ENCODE measurements at regions of chr6 and their contacts with region 1.

Region 1: DNA sequence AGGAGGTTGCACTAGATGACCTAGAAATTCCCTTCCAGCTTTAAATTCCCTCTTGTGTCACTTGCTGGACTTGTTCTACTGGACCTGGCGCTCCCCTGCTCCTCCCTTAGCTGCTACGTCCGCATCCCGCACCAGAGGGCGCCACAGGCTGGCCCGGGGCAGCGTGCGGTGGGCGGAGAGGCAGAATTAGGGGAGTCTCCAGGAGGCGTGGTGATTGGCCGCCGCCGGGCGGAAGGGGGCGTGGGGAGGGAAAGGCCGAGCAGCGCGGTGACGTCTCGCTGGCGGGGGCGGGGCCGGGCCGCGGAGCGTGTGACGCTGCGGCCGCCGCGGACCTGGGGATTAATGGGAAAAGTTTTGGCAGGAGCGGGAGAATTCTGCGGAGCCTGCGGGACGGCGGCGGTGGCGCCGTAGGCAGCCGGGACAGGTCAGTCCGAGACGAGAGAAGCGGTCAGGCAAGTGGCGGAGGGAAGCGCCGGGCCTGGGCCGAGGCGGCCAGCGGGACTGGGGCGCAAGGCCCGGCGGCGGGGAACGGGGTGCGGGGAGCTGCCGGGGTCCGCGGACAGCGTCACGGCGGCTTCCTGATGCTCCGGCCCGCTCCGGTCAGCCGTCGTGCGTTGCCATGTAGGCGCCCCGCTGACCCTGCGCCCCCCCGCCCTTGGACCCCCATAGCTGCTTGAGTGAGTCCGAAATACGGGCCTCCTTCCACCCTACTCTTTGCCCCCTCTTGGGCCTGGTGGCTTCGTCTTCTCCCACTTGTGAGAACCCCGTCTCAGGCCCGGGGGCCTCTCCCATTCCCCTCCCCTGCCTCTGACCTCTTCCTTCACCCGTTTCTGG is at the start of gene PPARD:
- DNase-seq: peak; percentile 97
- ATAC-seq: peak; percentile 99
- H3K4me3 ChIP-seq: peak within 1 kb of the TSS; percentile 48 to 92 (median 77)
- H3K4me3 Mint-ChIP-seq: peak within 1 kb of the TSS; percentile 99
- H3K27ac ChIP-seq: peak within 1 kb of the TSS; percentile 69 to 91
- H3K27ac Mint-ChIP-seq: peak within 1 kb of the TSS; percentile 95
- H3K4me1 ChIP-seq: peaks cover 39 to 49% of the 10 kb centered on the region in 2 donors
- H3K4me1 Mint-ChIP-seq: peaks cover 55% of the 10 kb centered on the region
- H3K27me3 ChIP-seq: no peaks in the 10 kb centered on the region
- H3K27me3 Mint-ChIP-seq: no peaks in the 10 kb centered on the region
- CTCF ChIP-seq: peak; percentile 92
- total RNA-seq, gene PPARD: 38.9 and 39.0 TPM in 2 replicates

Region 2: DNA sequence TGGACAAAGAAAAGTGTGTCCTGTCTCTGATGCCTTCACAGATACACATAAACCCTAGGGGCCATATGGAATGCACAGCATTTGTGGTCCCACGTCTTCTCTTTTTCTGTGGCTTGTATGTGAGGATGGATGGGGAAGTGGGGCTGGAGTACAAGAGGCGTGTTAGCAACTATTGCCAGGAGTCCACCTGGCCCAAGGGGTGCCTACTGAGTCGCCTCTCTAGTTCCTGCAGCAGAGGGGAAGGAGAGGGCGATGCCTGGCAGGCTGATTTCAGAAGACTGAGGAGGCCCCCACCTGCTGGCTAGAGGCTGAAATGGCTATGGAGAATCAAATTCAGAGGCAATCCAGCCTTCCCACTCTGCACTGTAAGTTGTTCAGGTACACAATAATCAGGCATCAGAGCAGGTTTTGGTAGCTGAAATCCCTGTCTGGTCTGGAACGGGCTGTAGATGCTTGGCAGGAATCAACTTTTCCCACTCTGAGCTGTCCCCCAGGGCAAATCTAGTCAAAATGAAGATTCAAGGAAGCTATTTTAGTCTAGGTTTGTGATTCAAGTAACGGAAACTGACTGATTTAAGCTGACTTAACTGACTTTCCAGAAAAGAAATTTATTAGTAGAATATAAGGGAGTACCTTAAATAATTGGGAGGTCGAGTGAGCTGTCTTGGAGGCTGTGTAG is 15.0 kb before region 1 on chr6:
- CTCF ChIA-PET with region 1: interaction called, 26 read pairs
- POLR2A ChIA-PET with region 1: interaction called, 7 read pairs
- intact Hi-C with region 1: loop called (anchors 2 kb)
- DNase-seq: peak; percentile 80
- ATAC-seq: peak; percentile 87
- H3K4me3 ChIP-seq: no peak overlapping the region
- H3K4me3 Mint-ChIP-seq: no peak overlapping the region
- H3K27ac ChIP-seq: peak overlapping the region in 1 of 2 donors; percentile 11
- H3K27ac Mint-ChIP-seq: peak overlapping the region; percentile 74
- H3K4me1 ChIP-seq: peaks cover 11 to 15% of the 10 kb centered on the region in 2 donors
- H3K4me1 Mint-ChIP-seq: peaks cover 16% of the 10 kb centered on the region
- H3K27me3 ChIP-seq: no peaks in the 10 kb centered on the region
- H3K27me3 Mint-ChIP-seq: no peaks in the 10 kb centered on the region
- CTCF ChIP-seq: peak; percentile 76

Region 3: DNA sequence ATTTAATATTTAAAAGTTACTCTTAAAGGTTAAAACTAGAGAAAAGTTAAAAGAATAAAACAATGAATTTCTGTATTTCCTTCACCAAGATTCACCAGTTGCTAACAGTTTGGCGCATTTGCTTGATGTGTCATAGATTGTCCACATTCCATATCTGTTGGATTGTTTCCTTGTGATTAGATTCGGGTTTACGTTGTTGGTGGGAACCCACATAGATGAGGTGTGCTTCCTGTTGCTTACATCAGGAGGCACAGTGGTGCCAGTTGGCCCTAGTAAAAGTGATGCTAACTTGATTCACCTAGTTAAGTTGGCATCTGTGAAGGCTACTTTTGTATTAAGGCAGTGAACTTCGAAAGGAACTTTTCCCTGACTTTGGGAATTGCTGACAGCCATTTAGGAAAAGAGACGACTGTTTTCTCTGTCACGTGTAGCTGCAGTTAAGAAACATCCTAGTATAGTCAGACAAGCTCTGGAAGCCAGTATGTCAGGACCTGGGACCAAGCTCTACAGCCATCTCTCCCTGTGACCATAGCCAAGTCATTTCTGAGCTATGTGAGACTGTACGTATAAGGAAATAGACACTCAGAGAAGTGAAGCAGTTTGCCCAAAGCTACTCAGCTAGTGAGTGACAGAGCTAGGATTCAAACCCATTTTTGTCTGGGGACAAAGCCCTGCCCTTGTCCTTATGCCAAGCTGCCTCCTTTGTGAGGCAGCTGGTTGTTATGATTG is 48.9 kb after region 1 on chr6:
- CTCF ChIA-PET with region 1: interaction called, 3 read pairs
- POLR2A ChIA-PET with region 1: interaction called, 4 read pairs
- intact Hi-C with region 1: loop called (anchors 10 kb)
- DNase-seq: no peak
- ATAC-seq: no peak
- H3K4me3 ChIP-seq: no peak overlapping the region
- H3K4me3 Mint-ChIP-seq: no peak overlapping the region
- H3K27ac ChIP-seq: no peak overlapping the region
- H3K27ac Mint-ChIP-seq: peak overlapping the region; percentile 26
- H3K4me1 ChIP-seq: peaks cover 20 to 34% of the 10 kb centered on the region in 2 donors
- H3K4me1 Mint-ChIP-seq: peaks cover 46% of the 10 kb centered on the region
- H3K27me3 ChIP-seq: no peaks in the 10 kb centered on the region
- H3K27me3 Mint-ChIP-seq: no peaks in the 10 kb centered on the region
- CTCF ChIP-seq: no peak

Region 4: GRCh38 chr6:35419417-35419816 is 76.9 kb after region 1 on chr6:
- CTCF ChIA-PET with region 1: interaction called, 10 read pairs
- POLR2A ChIA-PET with region 1: no interaction called
- intact Hi-C with region 1: no loop called
- DNase-seq: no peak
- ATAC-seq: no peak
- H3K4me3 ChIP-seq: no peak overlapping the region
- H3K4me3 Mint-ChIP-seq: no peak overlapping the region
- H3K27ac ChIP-seq: no peak overlapping the region
- H3K27ac Mint-ChIP-seq: no peak overlapping the region
- H3K4me1 ChIP-seq: peaks cover 3 to 11% of the 10 kb centered on the region in 2 donors
- H3K4me1 Mint-ChIP-seq: peaks cover 13% of the 10 kb centered on the region
- H3K27me3 ChIP-seq: no peaks in the 10 kb centered on the region
- H3K27me3 Mint-ChIP-seq: no peaks in the 10 kb centered on the region
- CTCF ChIP-seq: no peak

Region 5: GRCh38 chr6:35468181-35468979 is 125.9 kb after region 1 on chr6 and contains the start of gene RPL10A:
- CTCF ChIA-PET with region 1: interaction called, 30 read pairs
- POLR2A ChIA-PET with region 1: interaction called, 19 read pairs
- intact Hi-C with region 1: loop called (anchors 1 kb)
- DNase-seq: peak; percentile 98
- ATAC-seq: peak; percentile 91
- H3K4me3 ChIP-seq: peak within 1 kb of the TSS; percentile 51 to 95 (median 87)
- H3K4me3 Mint-ChIP-seq: peak within 1 kb of the TSS; percentile 99
- H3K27ac ChIP-seq: peak within 1 kb of the TSS; percentile 91 to 92
- H3K27ac Mint-ChIP-seq: peak within 1 kb of the TSS; percentile 99
- H3K4me1 ChIP-seq: peaks cover 19 to 34% of the 10 kb centered on the region in 2 donors
- H3K4me1 Mint-ChIP-seq: peaks cover 42% of the 10 kb centered on the region
- H3K27me3 ChIP-seq: no peaks in the 10 kb centered on the region
- H3K27me3 Mint-ChIP-seq: no peaks in the 10 kb centered on the region
- CTCF ChIP-seq: peak; percentile 91
- total RNA-seq, gene RPL10A: 1,621 and 1,687 TPM in 2 replicates

Measured in B cell (primary cell).